Gastrocnemius medialis (tissue), 4 donors: ENCODE measurements at regions of chr5 and their contacts with region 1.

Region 1: GRCh38 chr5:43484106-43484849 is 613 bp upstream of the TMEM267 start:
- DNase-seq: peak; percentile 56 to 74
- ATAC-seq: peak; percentile 86 to 88
- H3K4me3 ChIP-seq: peak overlapping the region; percentile 72 to 98 (median 84)
- H3K27ac ChIP-seq: peak overlapping the region; percentile 93 to 98 (median 96)
- H3K4me1 ChIP-seq: peaks cover 17% of the 10 kb centered on the region in 2 donors
- H3K27me3 ChIP-seq: no peaks in the 10 kb centered on the region
- CTCF ChIP-seq: peak; percentile 61 to 81 (median 63)
- POLR2A ChIP-seq: peak in 1 of 2 donors; percentile 10

Region 2: DNA sequence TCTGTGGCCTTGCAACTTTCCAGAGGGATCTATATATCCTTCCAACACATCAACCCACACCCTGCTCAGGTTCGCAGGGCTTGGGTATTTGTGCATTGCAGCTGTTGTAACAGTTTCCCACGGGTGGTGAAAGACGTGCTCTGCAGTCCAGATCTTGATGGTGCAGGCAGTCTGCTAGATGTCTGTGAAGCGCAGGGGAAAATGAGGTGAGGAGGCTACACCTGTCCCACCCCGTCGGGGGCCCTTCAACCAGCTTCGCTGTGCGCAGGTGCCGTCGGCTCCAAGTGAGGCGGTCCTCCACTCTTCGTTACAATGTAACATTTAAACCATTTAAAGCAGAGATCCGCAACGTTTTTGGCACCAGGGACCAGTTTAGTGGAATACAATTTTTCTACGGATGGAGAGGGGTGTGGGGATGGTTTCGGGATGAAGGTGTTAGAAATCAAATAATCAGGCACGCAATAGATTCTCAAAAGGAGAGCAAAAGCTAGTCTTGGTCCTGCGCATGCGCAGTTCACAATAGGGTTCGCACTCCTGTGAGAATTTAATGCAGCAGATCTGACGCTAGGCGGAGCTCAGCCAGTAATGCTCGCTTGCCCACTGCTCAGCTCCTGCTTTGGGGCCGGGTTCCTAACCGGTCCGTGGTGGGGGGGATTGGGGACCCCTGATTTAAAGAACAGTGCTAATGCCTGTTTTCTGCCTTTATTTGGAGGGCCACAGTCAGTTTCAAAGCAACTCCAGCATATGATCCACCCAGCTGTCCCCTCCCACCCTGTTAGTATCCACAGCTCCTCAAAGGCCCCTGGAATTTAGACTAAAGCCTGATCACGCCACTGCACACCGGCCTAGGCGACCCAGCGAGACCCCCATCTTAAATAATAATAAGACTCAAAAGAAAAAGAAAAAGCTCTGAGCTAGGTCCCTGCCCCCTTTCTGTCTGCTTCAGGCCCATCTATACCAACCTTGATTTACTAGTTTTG is 575.5 kb before region 1 on chr5:
- in situ Hi-C with region 1: no loop called
- intact Hi-C with region 1: no loop called
- DNase-seq: peak; percentile 75 to 81
- ATAC-seq: peak; percentile 92 to 96
- H3K4me3 ChIP-seq: peak overlapping the region; percentile 52 to 64 (median 56)
- H3K27ac ChIP-seq: peak overlapping the region in 1 of 4 donors; percentile 11
- H3K4me1 ChIP-seq: no peaks in the 10 kb centered on the region
- H3K27me3 ChIP-seq: no peaks in the 10 kb centered on the region
- CTCF ChIP-seq: peak; percentile 73 to 87 (median 83)
- POLR2A ChIP-seq: no peak

Region 3: GRCh38 chr5:42994246-42995151 is 489.8 kb before region 1 on chr5:
- in situ Hi-C with region 1: no loop called
- intact Hi-C with region 1: loop called (anchors 2 kb)
- DNase-seq: peak; percentile 64 to 85
- ATAC-seq: peak; percentile 87 to 88
- H3K4me3 ChIP-seq: peak overlapping the region; percentile 46 to 70 (median 66)
- H3K27ac ChIP-seq: peak overlapping the region; percentile 85 to 93 (median 88)
- H3K4me1 ChIP-seq: peaks cover 5 to 15% of the 10 kb centered on the region in 2 donors
- H3K27me3 ChIP-seq: peaks cover 68 to 83% (median 69%) of the 10 kb centered on the region in 3 donors
- CTCF ChIP-seq: peak; percentile 84 to 92 (median 89)
- POLR2A ChIP-seq: no peak

Region 4: DNA sequence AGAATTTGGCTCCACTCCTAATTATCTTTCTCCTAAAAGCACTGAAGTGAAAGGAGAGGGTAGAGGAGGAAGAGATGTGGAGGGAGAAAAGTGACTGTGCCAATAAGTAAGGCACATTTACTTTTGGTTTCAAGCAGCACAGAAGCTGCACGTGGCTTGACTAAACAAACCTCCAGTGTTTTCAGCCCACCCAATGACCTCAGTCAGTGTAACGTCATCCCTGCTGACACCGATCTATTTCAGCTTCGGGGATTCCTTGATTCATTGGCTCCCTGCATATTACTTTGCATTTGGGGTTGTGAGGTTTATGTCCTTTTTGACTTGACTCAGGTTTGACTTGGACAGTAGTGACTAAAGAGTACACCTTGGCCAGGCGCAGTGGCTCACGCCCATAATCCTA is 327.9 kb before region 1 on chr5:
- in situ Hi-C with region 1: no loop called
- intact Hi-C with region 1: no loop called
- DNase-seq: no peak
- ATAC-seq: no peak
- H3K4me3 ChIP-seq: no peak overlapping the region
- H3K27ac ChIP-seq: no peak overlapping the region
- H3K4me1 ChIP-seq: peaks cover 19 to 21% of the 10 kb centered on the region in 2 donors
- H3K27me3 ChIP-seq: no peaks in the 10 kb centered on the region
- CTCF ChIP-seq: no peak
- POLR2A ChIP-seq: no peak

Region 5: DNA sequence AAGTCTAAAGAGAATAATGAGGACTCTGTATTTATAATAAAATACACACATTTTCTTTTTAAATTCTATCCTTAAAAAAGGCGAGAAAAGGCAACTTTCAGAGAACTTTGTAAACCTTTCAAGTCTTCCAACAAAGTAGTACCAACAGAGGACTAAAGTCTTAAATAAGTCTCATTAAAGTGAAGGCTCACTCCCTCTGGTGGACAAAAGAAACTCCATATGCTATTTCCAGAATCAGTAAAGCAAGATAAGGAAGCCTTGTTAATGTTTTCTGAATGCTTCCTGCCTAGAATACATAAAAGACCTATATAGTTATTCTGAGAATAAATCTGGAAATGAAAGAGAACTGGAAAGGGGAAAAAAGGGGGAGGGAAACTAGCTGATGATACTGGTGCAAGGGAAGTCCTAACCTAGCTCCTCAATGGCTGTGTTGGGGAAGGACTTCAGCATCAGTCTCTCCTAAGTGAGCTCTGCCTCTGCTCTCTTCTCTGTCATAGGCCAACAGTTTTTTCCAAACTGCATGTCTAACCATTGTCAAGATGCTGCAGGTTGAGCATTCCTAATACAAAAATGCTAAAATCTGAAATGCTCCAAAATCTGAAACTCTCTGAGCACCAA is 178.2 kb before region 1 on chr5:
- in situ Hi-C with region 1: loop called in 2 of 4 experiments (anchors 10 to 25 kb)
- intact Hi-C with region 1: loop called (anchors 5 kb)
- DNase-seq: no peak
- ATAC-seq: peak in 1 of 2 donors; percentile 60
- H3K4me3 ChIP-seq: no peak overlapping the region
- H3K27ac ChIP-seq: no peak overlapping the region
- H3K4me1 ChIP-seq: peaks cover under 1 to 10% of the 10 kb centered on the region in 2 donors
- H3K27me3 ChIP-seq: no peaks in the 10 kb centered on the region
- CTCF ChIP-seq: peak; percentile 32 to 62 (median 41)
- POLR2A ChIP-seq: no peak

Region 6: GRCh38 chr5:43497311-43498104 is 13.2 kb after region 1 on chr5:
- in situ Hi-C with region 1: no loop called
- intact Hi-C with region 1: no loop called
- DNase-seq: no peak
- ATAC-seq: no peak
- H3K4me3 ChIP-seq: no peak overlapping the region
- H3K27ac ChIP-seq: no peak overlapping the region
- H3K4me1 ChIP-seq: no peaks in the 10 kb centered on the region
- H3K27me3 ChIP-seq: no peaks in the 10 kb centered on the region
- CTCF ChIP-seq: no peak
- POLR2A ChIP-seq: no peak

Region 7: DNA sequence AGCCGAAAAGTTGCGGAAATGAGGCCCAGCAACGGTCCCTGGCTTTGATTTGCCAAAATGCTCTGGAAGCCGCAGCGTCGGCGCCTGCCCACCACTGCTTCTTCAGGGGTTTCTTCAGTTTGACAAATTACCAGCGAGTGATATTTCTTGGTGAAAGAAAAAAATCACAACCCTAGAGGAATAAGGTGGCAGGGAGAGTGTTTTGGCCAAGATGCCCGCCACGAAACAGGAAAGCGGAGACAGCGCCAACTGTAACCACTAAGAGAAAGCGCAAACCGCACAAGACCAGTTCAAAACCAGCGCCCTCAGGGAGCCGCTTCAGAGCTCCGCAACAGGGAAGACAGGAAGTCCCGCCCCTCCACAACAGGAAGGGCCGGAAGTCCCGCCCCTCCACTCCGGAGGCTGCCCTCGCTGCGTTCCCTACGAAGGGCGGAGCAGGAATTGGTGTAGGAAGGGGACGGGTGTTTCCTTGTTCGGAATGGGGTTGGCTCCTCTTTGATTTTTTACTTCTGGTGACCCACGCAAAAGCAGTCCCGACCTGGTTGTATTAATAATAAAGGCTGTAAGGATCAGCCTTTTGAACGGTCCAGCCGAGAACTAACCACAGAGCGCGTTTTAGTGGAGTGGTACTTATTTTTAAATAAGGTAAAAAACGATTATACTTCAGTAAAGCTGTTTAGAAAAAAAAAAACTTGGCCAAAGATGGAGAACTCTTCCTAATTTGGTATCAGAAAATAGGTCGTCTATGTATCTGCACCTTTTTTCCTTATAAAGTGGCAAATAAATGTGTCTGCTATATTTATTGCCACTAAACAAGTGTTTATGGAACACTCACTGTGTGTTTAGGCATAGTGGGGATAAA is 30.8 kb after region 1 on chr5 and contains the start of gene C5orf34:
- in situ Hi-C with region 1: no loop called
- intact Hi-C with region 1: loop called (anchors 1 kb)
- DNase-seq: peak; percentile 95
- ATAC-seq: peak; percentile 99 to 100
- H3K4me3 ChIP-seq: peak within 1 kb of the TSS; percentile 69 to 83 (median 81)
- H3K27ac ChIP-seq: peak within 1 kb of the TSS; percentile 80 to 90 (median 85)
- H3K4me1 ChIP-seq: peaks cover 12% of the 10 kb centered on the region in 2 donors
- H3K27me3 ChIP-seq: no peaks in the 10 kb centered on the region
- CTCF ChIP-seq: no peak
- POLR2A ChIP-seq: peak; percentile 40 to 50
- total RNA-seq, gene C5orf34: 0.16 to 0.27 (median 0.20) TPM in 3 of 4 donors, not detected in the other

Region 8: GRCh38 chr5:43582082-43583005 is 98.1 kb after region 1 on chr5:
- in situ Hi-C with region 1: no loop called
- intact Hi-C with region 1: no loop called
- DNase-seq: no peak
- ATAC-seq: no peak
- H3K4me3 ChIP-seq: no peak overlapping the region
- H3K27ac ChIP-seq: peak overlapping the region in 1 of 4 donors; percentile 6
- H3K4me1 ChIP-seq: peaks cover 7 to 12% of the 10 kb centered on the region in 2 donors
- H3K27me3 ChIP-seq: no peaks in the 10 kb centered on the region
- CTCF ChIP-seq: no peak
- POLR2A ChIP-seq: no peak

Region 9: DNA sequence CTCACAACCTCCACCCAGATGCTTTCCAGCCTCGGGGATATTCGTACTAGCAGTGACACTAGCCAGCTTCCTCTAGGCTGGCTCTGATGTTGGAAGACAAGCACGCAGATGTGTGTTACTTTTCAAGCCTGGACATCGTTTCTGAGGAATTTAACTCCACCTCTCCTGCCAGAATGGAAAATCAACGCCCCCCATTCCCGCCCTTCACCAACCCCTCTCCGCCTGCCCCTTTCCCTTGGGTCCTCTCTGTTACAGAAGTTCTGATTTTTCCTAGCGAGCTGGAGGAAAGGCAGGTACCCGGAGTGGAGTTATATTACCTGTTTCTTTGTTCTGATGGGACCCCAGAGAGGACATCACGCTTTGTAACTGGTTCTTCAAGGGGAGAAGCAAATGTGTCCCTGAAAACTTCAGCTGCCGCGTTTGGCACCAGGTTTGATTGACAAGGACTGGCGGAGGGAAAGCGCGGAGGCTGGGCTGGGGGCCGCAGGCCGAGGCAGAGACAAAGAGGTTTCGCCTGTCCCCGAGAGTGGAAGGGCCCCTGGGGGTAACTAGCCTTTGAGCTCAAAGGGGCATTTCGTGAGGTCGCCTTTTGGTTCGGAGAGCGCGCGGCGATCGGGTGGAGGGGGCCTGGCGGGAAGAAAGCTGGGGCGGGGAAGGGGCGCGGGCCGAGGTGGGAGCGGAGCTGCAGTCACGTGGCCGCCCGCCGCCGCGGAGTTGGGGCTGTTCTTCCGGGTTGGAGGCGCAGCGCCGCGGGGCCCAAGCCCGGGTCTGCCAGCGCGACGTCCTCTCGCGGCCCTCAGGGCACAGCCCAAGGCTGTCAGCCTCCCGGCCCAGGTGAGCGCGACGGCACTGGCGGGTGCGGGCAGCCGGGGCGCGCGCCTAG is 118.4 kb after region 1 on chr5 and contains the start of gene NNT:
- in situ Hi-C with region 1: no loop called
- intact Hi-C with region 1: loop called (anchors 5 kb)
- DNase-seq: peak; percentile 75 to 78
- ATAC-seq: peak; percentile 45 to 46
- H3K4me3 ChIP-seq: peak within 1 kb of the TSS; percentile 75 to 85 (median 82)
- H3K27ac ChIP-seq: peak within 1 kb of the TSS; percentile 92 to 98 (median 97)
- H3K4me1 ChIP-seq: peaks cover 46 to 64% of the 10 kb centered on the region in 2 donors
- H3K27me3 ChIP-seq: no peaks in the 10 kb centered on the region
- CTCF ChIP-seq: peak in 1 of 5 experiments; percentile 8
- POLR2A ChIP-seq: peak; percentile 62 to 66
- total RNA-seq, gene NNT: 90.3 to 149 (median 127) TPM